MCF 10A (cell line): ENCODE measurements at regions of chr12 and their contacts with region 1.

Region 1: GRCh38 chr12:21559855-21560569 is 33.9 kb downstream of the SPX start:
- DNase-seq: peak; percentile 89
- H3K4me3 Mint-ChIP-seq: peak overlapping the region; percentile 61
- H3K27ac Mint-ChIP-seq: peak overlapping the region; percentile 97
- H3K4me1 Mint-ChIP-seq: peaks cover 15% of the 10 kb centered on the region
- H3K27me3 Mint-ChIP-seq: no peaks in the 10 kb centered on the region
- CTCF ChIP-seq: no peak

Region 2: GRCh38 chr12:21539797-21540196 is 20.2 kb before region 1 on chr12:
- CTCF ChIA-PET with region 1: interaction called, 3 read pairs
- POLR2A ChIA-PET with region 1: interaction called, 29 read pairs
- intact Hi-C with region 1: no loop called
- DNase-seq: peak; percentile 24
- H3K4me3 Mint-ChIP-seq: no peak overlapping the region
- H3K27ac Mint-ChIP-seq: peak overlapping the region; percentile 57
- H3K4me1 Mint-ChIP-seq: peaks cover 19% of the 10 kb centered on the region
- H3K27me3 Mint-ChIP-seq: no peaks in the 10 kb centered on the region
- CTCF ChIP-seq: no peak

Region 3: DNA sequence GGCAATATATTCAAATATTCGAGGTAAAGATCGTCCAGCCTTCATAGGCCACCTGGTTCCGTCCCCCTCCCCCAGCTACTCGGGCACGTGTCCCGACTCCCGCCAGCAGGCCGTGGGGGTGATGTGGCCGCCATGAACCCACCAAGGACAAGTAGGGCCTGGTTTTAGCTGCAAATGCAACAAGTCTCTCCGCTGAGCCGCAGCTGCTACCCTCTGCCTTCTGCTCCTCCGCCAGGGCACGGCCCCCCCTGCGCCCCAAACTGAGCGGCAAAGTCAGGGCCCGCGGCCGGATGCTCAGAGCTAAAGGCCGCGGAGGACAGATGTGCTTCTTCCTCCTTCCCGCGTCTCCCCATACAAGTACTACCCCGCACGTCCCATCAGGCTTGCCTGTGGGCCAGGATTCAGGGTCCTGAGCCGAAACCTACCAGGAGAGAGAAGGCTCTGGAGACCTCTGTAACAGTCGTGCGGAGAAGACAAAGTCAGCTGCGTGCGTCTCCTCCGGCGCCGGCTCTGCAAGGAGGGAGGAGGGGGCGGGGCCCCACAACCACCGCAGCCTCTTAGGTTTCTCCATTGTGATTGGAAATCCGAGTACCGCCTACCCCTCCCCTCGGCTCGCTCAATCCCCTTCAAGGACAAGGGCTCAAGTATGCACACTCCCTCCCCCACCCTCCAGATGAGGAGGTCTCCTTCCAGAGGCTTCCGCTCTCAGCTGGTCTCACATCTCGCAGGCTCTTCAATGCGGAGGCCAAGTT is 97.5 kb after region 1 on chr12 and contains the start of gene LDHB:
- CTCF ChIA-PET with region 1: no interaction called
- POLR2A ChIA-PET with region 1: interaction called, 27 read pairs
- intact Hi-C with region 1: no loop called
- DNase-seq: peak; percentile 94
- H3K4me3 Mint-ChIP-seq: peak within 1 kb of the TSS; percentile 89
- H3K27ac Mint-ChIP-seq: peak within 1 kb of the TSS; percentile 86
- H3K4me1 Mint-ChIP-seq: peaks cover 26% of the 10 kb centered on the region
- H3K27me3 Mint-ChIP-seq: no peaks in the 10 kb centered on the region
- CTCF ChIP-seq: no peak
- total RNA-seq, gene LDHB: 715 and 788 TPM in 2 replicates